GM10248 (cell line): ENCODE measurements at regions of chr10 and their contacts with region 1.

Region 1: GRCh38 chr10:48608279-48608681 is 3.4 kb upstream of the ARHGAP22 start:
- DNase-seq: peak; percentile 79
- CTCF ChIP-seq: peak; percentile 85

Region 2: DNA sequence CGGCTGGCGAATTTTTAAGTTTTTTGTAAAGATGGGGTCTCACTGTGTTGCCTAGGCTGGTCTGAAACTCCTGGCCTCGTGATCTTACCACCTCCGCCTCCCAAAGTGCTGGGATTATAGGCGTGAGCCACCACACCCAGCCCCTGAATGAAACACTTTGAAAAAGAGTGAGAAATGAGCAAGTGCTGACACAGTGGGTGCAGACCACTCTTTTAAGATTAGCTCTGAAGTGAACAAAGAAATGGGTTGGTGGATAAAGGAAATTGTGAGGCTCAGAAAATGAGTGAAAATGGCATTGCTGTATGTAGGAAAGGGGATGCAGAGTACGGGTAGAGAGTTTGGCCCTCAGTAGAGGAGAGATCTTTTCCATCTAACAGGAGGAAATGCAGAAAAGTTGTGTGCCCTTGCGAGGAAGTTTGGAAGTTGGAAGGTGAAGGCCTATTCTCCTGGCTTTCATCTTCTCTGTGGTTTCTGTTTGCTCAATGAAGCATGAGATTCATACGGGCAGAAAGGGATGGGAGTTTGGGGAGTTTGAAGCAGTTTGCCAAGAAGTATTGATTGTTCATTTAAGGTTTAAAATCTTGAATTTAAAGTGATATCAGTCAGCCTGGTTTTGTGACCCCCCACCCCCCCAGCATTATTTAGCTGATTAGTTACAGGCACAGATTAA is 290.8 kb before region 1 on chr10:
- CTCF ChIA-PET with region 1: no interaction called
- POLR2A ChIA-PET with region 1: no interaction called
- DNase-seq: no peak
- CTCF ChIP-seq: no peak

Region 3: DNA sequence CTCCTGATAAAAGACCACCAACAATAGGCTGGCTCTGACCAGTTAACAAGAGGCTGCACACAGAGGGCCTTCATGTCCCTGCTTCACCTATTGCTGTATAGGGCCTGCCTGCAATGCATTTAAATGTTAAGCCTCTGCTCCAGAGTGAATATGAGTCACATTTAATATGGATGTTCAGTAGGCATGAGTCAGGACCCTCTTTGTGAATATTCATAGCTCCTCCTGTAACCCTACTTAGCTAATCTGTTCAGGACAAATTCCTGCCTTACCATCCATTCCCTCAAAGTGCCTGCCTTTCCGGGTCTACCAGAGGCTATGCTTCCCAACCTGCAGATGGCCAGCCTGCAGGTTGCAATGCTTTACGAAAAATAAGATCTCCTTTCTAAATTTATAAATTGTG is 35.9 kb before region 1 on chr10:
- CTCF ChIA-PET with region 1: interaction called, 11 read pairs
- POLR2A ChIA-PET with region 1: no interaction called
- DNase-seq: no peak
- CTCF ChIP-seq: no peak

Region 4: GRCh38 chr10:48589266-48589665 is 19.0 kb before region 1 on chr10:
- CTCF ChIA-PET with region 1: interaction called, 39 read pairs
- POLR2A ChIA-PET with region 1: no interaction called
- DNase-seq: no peak
- CTCF ChIP-seq: no peak

Region 5: GRCh38 chr10:48623607-48624132 is 15.4 kb after region 1 on chr10:
- CTCF ChIA-PET with region 1: interaction called, 48 read pairs
- POLR2A ChIA-PET with region 1: no interaction called
- DNase-seq: no peak
- CTCF ChIP-seq: no peak

Region 6: DNA sequence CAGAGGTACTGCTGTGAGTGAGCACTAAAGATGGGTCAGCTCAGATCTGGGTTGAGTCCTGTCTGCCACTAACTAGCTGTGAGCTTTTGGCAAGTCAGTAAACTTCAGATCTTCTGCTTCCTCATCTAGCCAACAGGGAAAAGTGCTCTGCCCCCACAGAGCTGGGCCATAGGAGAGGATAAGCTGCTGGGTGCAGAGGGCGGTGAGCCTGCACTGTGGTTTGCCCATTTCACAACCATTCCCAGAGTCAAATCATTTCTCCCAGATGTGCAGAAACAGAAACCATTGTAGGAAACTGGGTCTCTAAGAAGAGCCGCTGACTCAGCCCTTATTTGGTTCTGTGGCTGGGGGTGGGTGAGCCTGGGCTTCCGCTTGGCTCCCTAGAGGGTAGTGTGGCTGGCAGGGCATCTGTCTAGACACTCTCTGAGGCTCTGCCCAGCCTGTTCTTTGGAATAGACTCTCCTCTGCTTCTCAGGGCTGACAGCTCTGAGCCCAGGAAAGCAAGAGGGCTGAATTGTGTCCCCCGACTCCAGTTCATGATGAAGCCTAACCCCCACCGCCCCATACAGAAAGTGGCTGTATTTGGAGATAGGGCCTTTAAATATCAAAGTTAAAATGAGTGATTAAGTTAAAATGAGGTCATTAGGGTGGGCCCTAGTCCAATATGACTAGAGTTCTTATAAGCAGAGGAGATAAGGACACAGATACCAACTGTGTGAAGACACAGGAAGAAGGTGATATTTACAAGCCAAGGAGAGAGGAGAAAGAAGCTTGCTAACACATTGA is 26.1 kb after region 1 on chr10:
- CTCF ChIA-PET with region 1: interaction called, 12 read pairs
- POLR2A ChIA-PET with region 1: no interaction called
- DNase-seq: no peak
- CTCF ChIP-seq: no peak

Region 7: DNA sequence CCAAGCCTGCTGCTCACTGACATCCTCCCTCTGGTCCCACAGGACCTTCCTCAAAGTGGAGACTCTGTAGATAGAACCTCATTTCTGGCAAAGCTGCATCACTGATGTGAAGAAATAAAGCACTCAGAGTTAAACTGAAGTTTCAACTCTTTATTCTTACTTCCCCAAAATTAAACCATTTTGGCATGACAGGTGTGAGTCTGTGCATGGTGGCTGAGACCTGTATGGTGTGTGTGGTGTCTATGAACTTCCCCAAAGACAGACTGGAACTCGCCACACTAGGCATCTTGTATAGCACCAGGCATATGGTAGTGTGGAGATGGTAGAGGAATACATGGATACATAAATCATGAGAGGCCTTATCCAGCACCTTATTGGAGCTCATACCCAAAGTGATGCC is 69.8 kb after region 1 on chr10:
- CTCF ChIA-PET with region 1: no interaction called
- POLR2A ChIA-PET with region 1: no interaction called
- DNase-seq: no peak
- CTCF ChIP-seq: no peak

Region 8: GRCh38 chr10:48782386-48782785 is 174.1 kb after region 1 on chr10:
- CTCF ChIA-PET with region 1: no interaction called
- POLR2A ChIA-PET with region 1: no interaction called
- DNase-seq: no peak
- CTCF ChIP-seq: no peak

Region 9: GRCh38 chr10:48968036-48968435 is 359.8 kb after region 1 on chr10:
- CTCF ChIA-PET with region 1: no interaction called
- POLR2A ChIA-PET with region 1: no interaction called
- DNase-seq: no peak
- CTCF ChIP-seq: no peak